MCF 10A (cell line): ENCODE measurements at regions of chr17 and their contacts with region 1.

Region 1: GRCh38 chr17:28240991-28241340 is 78.0 kb upstream of the TMEM97 start:
- DNase-seq: no peak
- H3K4me3 Mint-ChIP-seq: no peak overlapping the region
- H3K27ac Mint-ChIP-seq: no peak overlapping the region
- H3K4me1 Mint-ChIP-seq: no peaks in the 10 kb centered on the region
- H3K27me3 Mint-ChIP-seq: peaks cover 6% of the 10 kb centered on the region
- CTCF ChIP-seq: no peak

Region 2: DNA sequence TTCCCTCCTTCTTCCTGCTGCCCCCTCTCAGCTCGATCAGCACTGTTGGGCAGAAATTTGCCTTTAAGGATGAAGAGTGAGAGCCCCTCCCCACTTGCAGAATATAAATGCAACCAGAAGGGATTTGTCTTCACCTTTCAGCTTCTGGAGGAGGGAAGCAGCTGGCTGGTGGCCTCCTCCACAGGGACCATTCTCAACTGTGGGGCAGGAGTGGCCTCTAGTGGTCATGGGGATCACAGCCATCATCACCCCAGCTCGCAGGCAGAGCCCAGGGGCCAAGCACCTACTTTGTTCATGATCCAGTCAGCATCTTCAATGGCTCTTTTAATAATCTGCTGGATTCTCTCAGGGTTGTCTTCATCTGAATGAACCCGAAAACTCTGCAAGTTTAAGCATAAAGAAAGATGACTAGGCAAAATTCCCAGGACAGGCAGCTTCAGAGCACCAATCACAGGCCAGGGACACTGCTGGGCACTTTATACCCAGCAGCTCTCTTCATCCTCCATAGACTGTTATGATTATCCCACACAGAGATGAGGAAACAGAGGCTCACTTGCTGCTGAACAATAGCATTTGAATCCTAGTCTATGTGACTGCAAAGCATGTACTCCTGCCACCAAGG is 360.9 kb before region 1 on chr17:
- CTCF ChIA-PET with region 1: no interaction called
- POLR2A ChIA-PET with region 1: no interaction called
- intact Hi-C with region 1: no loop called
- DNase-seq: peak; percentile 77
- H3K4me3 Mint-ChIP-seq: no peak overlapping the region
- H3K27ac Mint-ChIP-seq: no peak overlapping the region
- H3K4me1 Mint-ChIP-seq: no peaks in the 10 kb centered on the region
- H3K27me3 Mint-ChIP-seq: no peaks in the 10 kb centered on the region
- CTCF ChIP-seq: peak; percentile 89

Region 3: DNA sequence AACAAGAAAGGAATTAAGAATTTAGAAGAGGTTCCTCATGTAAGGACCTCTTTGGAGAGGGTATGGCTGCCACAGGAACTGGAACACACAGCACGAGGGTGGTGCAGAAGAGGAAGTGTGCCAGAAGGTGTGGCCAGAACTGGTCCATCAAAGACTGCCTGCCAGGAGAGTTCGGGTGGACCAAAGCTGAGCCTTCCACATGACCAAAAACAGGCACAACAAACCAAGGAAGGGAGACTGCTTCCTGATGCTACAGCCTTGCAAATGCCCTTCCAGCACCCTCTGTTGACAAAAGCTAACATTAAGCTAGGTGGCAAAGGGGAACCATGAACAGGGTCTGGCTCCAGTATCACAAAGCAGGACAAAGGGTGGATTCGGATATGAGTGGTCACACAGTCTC is 47.7 kb before region 1 on chr17:
- CTCF ChIA-PET with region 1: no interaction called
- POLR2A ChIA-PET with region 1: no interaction called
- intact Hi-C with region 1: no loop called
- DNase-seq: no peak
- H3K4me3 Mint-ChIP-seq: no peak overlapping the region
- H3K27ac Mint-ChIP-seq: peak overlapping the region; percentile 78
- H3K4me1 Mint-ChIP-seq: no peaks in the 10 kb centered on the region
- H3K27me3 Mint-ChIP-seq: no peaks in the 10 kb centered on the region
- CTCF ChIP-seq: no peak

Region 4: GRCh38 chr17:28227316-28228125 is 13.4 kb before region 1 on chr17:
- CTCF ChIA-PET with region 1: interaction called, 14 read pairs
- POLR2A ChIA-PET with region 1: interaction called, 3 read pairs
- intact Hi-C with region 1: no loop called
- DNase-seq: peak; percentile 83
- H3K4me3 Mint-ChIP-seq: peak overlapping the region; percentile 88
- H3K27ac Mint-ChIP-seq: peak overlapping the region; percentile 94
- H3K4me1 Mint-ChIP-seq: peaks cover 5% of the 10 kb centered on the region
- H3K27me3 Mint-ChIP-seq: no peaks in the 10 kb centered on the region
- CTCF ChIP-seq: no peak

Region 5: GRCh38 chr17:28327031-28327607 is 86.2 kb after region 1 on chr17:
- CTCF ChIA-PET with region 1: interaction called, 85 read pairs
- POLR2A ChIA-PET with region 1: interaction called, 3 read pairs
- intact Hi-C with region 1: loop called (anchors 5 kb)
- DNase-seq: no peak
- H3K4me3 Mint-ChIP-seq: no peak overlapping the region
- H3K27ac Mint-ChIP-seq: no peak overlapping the region
- H3K4me1 Mint-ChIP-seq: peaks cover 9% of the 10 kb centered on the region
- H3K27me3 Mint-ChIP-seq: no peaks in the 10 kb centered on the region
- CTCF ChIP-seq: no peak

Region 6: DNA sequence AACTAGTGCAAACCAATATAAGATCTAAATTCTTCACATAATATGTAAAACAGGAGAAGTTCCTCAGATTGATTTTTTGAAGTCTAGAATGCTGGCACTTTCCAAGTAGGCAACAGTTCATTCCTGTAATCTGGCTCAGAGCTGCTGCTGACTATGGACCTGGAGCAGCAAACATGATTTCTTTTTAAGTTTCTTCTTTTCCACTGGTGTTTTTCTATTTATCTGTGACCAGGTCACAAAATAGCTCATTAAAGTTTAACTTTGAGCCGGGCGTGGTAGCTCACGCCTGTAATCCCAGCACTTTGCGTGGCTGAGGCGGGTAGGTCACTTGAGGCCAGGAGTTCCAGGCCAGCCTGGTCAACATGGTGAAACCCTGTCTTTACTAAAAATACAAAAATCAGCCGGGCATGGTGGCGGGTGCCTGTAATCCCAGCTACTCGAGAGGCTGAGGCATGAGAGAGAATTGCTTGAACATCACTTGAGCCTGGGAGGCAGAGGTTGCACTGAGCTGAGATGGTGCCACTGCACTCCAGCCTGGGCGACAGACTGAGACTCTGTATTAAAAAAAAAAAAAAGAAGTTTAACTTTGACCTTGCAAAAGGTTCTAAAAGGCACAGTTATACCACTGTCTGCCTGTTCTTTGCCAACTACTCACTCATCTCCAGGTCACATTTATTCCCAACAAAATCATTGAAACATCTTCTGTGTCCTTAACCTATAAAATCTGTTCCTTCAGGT is 203.1 kb after region 1 on chr17:
- CTCF ChIA-PET with region 1: no interaction called
- POLR2A ChIA-PET with region 1: no interaction called
- intact Hi-C with region 1: no loop called
- DNase-seq: no peak
- H3K4me3 Mint-ChIP-seq: no peak overlapping the region
- H3K27ac Mint-ChIP-seq: no peak overlapping the region
- H3K4me1 Mint-ChIP-seq: no peaks in the 10 kb centered on the region
- H3K27me3 Mint-ChIP-seq: no peaks in the 10 kb centered on the region
- CTCF ChIP-seq: no peak